ENCODE measurements at regions of chr13 and their contacts with region 1.

Region 1: GRCh38 chr13:35729926-35730627 is 253.6 kb upstream of the MAB21L1 start:
- DNase-seq: peak; percentile 82
- ATAC-seq: peak; percentile 79 to 88

Region 2: DNA sequence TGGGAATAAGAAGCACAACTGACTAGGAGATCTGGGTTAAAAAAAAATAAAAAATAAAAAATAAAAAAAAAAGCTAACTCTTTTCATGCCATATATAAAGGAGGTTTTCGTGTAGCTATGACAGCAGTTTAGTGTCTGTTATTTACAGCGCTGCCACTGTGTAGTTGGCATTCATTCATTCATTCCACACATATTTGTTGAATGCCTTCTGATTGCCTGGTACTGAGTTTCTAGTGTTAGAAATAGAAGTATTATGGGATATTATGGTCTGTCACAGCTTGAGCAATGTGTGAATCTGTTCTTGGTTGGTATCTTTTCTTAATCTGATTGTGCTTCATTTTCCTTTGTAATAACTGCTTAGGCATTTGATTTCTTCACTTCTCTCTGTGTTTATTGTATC is 550.6 kb before region 1 on chr13:
- intact Hi-C with region 1: no loop called
- DNase-seq: no peak
- ATAC-seq: peak; percentile 75 to 80

Region 3: GRCh38 chr13:35475960-35476943 is 253.8 kb before region 1 on chr13 and contains the start of gene MAB21L1:
- intact Hi-C with region 1: no loop called
- DNase-seq: peak; percentile 15
- ATAC-seq: peak; percentile 44 to 66
- total RNA-seq, gene MAB21L1: 0.24 to 0.29 TPM

Region 4: GRCh38 chr13:35781036-35782000 is 51.2 kb after region 1 on chr13:
- intact Hi-C with region 1: no loop called
- DNase-seq: no peak
- ATAC-seq: no peak

Region 5: GRCh38 chr13:35797991-35798390 is 67.9 kb after region 1 on chr13:
- intact Hi-C with region 1: loop called in 1 of 2 experiments (anchors 5 kb)
- DNase-seq: no peak
- ATAC-seq: no peak

Region 6: GRCh38 chr13:36490055-36490454 is 760.0 kb after region 1 on chr13:
- intact Hi-C with region 1: no loop called
- DNase-seq: no peak
- ATAC-seq: no peak